ENCODE measurements at regions of chr7 and their contacts with region 1.

Region 1: DNA sequence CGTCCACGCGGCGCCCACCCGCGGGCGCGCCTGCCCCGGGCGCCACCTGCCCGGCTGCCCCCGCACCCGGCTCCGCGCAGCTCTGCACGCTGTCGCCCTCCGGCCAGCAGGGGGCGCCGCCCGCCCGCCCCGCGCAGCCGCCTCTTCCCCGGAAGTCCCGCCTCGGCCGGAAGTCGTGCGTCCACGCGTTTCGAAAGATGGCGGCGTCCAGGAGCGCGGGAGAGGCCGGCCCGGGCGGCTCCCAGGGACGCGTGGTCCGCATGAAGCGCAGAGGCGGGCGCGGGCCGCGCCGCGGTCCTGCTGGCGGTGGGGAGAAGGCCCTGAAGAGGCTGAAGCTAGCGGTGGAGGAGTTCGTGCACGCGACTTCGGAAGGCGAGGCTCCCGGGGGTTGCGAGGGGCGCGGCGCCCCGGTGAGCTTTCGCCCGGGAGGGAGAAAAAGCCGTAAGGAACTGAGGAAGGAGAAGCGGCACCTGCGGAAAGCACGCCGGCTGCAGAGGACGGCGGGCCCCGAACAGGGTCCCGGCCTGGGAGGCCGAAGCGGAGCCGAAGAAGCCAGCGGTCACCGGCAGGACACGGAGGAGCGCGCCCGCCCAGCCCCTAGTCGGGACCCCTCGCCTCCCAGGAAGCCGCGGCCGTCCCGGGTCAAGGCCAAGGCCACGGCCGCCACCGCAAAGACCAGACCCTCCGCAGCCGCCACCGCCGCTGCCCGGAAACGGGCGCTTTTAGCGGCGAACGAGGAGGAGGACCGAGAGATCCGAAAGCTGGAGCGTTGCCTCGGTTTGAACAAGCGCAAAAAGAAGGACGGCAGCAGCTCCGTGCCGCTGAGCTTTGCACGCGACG is at the start of gene NOM1:
- DNase-seq: peak; percentile 91
- ATAC-seq: peak; percentile 93
- H3K4me3 Mint-ChIP-seq: peak within 1 kb of the TSS; percentile 93
- H3K27ac Mint-ChIP-seq: peak within 1 kb of the TSS; percentile 79
- H3K4me1 Mint-ChIP-seq: peaks cover 39% of the 10 kb centered on the region
- H3K27me3 Mint-ChIP-seq: peaks cover 19% of the 10 kb centered on the region
- total RNA-seq, gene NOM1: 31.9 to 35.0 TPM

Region 2: GRCh38 chr7:156892821-156893706 is 56.7 kb before region 1 on chr7 and contains the start of gene LMBR1:
- CTCF ChIA-PET with region 1: interaction called, 23 read pairs
- DNase-seq: peak; percentile 95
- ATAC-seq: peak; percentile 84
- H3K4me3 Mint-ChIP-seq: peak within 1 kb of the TSS; percentile 88
- H3K27ac Mint-ChIP-seq: peak within 1 kb of the TSS; percentile 90
- H3K4me1 Mint-ChIP-seq: peaks cover 54% of the 10 kb centered on the region
- H3K27me3 Mint-ChIP-seq: no peaks in the 10 kb centered on the region
- total RNA-seq, gene LMBR1: 64.0 to 69.8 TPM

Region 3: GRCh38 chr7:156927571-156928405 is 22.0 kb before region 1 on chr7:
- CTCF ChIA-PET with region 1: interaction called, 49 read pairs
- DNase-seq: no peak
- ATAC-seq: no peak
- H3K4me3 Mint-ChIP-seq: no peak overlapping the region
- H3K27ac Mint-ChIP-seq: no peak overlapping the region
- H3K4me1 Mint-ChIP-seq: peaks cover 35% of the 10 kb centered on the region
- H3K27me3 Mint-ChIP-seq: peaks cover 27% of the 10 kb centered on the region

Region 4: DNA sequence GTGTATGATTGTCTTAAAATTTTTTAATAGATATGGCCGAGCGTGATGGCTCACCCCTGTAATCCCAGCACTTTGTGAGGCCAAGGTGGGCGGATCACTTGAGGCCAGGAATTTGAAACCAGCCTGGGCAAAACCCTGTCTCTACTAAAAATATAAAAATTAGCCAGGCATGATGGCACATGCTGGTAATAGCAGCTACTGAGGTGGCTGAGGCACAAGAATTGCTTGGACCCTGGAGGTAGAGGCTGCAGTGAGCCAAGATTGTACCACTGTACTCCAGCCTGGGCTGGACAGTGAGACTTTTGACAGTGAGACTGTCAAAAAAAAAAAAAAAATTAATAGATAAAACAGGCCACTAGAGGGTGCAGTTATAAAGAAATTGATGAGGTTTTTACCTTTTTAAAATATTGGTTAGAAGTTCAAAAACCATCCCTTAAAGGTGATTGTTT is 20.2 kb after region 1 on chr7:
- CTCF ChIA-PET with region 1: interaction called, 15 read pairs
- DNase-seq: no peak
- ATAC-seq: peak; percentile 30
- H3K4me3 Mint-ChIP-seq: no peak overlapping the region
- H3K27ac Mint-ChIP-seq: no peak overlapping the region
- H3K4me1 Mint-ChIP-seq: no peaks in the 10 kb centered on the region
- H3K27me3 Mint-ChIP-seq: no peaks in the 10 kb centered on the region

Region 5: DNA sequence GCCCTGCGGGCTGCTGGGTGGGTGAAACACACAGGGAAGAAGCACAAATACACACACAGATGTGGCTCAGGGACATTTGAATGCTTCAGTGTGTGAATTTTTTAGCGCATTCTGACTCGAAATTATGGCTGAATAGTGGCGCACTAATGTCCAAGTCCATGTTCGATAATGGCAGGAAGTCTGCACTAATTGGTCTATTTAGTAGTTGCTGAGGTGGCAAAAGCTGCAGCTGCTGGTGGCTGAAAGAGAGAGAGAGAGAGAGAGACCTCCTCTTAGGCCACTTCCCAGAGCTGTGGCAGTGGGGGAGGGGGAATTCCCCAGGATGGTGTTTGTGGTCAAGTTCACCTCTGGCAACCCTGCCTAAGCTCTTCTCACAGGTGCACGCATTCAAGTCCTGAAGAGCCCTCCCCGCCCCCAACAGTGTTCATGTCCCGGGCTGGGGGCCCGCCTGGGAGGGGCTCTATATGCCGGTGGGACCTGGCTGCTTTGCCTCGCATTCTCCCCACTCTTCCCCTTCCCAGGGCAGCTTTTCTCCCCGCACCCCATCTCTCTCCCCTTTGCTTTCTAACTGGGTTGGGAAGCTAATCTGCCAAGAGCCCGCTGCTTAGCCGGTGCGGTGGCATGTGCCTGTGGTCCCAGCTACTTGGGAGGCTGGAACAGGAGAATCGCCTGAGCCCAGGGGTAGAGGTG is 66.7 kb after region 1 on chr7:
- CTCF ChIA-PET with region 1: no interaction called
- DNase-seq: peak; percentile 60
- ATAC-seq: peak; percentile 53
- H3K4me3 Mint-ChIP-seq: peak overlapping the region; percentile 24
- H3K27ac Mint-ChIP-seq: no peak overlapping the region
- H3K4me1 Mint-ChIP-seq: peaks cover 20% of the 10 kb centered on the region
- H3K27me3 Mint-ChIP-seq: peaks cover 85% of the 10 kb centered on the region

Measured in activated CD8-positive, alpha-beta memory T cell treated with anti-CD3 and anti-CD28 coated beads, Interleukin-2, amount 10 ng/mL, durations not matched to agents 7 days and 5 days (primary cell).